Activated CD4-positive, alpha-beta memory T cell treated with anti-CD3 and anti-CD28 coated beads for 36 hours (primary cell): ENCODE measurements at regions of chr9 and their contacts with region 1.

Region 1: DNA sequence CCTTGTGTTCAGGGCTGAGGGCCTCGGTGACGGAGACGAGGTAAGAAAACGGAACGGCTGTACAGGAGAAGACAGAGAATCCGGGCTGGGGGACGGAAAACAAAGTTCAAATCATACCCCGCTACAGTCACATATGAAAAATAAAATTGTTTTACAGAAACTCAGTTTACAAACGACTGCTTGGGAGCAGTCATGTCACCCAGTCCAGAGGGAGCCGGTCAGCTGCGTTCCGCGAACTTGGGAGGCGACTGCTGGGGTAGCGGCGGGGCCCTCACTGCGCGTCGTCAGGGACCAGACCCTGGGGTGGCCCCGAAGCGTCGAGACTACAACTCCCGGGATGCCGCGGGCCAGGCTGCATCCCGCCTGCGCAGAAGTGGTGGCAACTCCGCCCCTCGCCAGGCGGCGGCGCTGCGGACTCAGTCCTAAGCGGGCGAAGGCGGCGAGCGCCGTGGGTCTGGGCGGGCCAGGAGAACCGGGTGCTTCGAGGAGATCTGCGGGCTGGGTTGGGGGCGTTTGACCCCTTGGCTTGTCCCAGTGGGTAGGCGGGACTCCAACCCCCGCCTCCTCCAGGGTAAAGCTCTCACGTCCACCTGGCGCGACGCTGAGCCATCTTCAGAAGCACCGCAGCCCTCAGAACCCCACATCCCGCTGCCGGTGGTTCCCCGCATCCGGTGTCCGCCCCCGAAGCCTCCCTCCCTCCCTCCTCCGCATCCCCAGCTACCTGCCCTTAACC is 4.0 kb downstream of the SIT1 start:
- DNase-seq: peak; percentile 95
- H3K4me3 Mint-ChIP-seq: peak overlapping the region; percentile 91
- H3K27ac Mint-ChIP-seq: peak overlapping the region; percentile 93
- H3K4me1 Mint-ChIP-seq: peaks cover 49% of the 10 kb centered on the region
- H3K27me3 Mint-ChIP-seq: no peaks in the 10 kb centered on the region

Region 2: DNA sequence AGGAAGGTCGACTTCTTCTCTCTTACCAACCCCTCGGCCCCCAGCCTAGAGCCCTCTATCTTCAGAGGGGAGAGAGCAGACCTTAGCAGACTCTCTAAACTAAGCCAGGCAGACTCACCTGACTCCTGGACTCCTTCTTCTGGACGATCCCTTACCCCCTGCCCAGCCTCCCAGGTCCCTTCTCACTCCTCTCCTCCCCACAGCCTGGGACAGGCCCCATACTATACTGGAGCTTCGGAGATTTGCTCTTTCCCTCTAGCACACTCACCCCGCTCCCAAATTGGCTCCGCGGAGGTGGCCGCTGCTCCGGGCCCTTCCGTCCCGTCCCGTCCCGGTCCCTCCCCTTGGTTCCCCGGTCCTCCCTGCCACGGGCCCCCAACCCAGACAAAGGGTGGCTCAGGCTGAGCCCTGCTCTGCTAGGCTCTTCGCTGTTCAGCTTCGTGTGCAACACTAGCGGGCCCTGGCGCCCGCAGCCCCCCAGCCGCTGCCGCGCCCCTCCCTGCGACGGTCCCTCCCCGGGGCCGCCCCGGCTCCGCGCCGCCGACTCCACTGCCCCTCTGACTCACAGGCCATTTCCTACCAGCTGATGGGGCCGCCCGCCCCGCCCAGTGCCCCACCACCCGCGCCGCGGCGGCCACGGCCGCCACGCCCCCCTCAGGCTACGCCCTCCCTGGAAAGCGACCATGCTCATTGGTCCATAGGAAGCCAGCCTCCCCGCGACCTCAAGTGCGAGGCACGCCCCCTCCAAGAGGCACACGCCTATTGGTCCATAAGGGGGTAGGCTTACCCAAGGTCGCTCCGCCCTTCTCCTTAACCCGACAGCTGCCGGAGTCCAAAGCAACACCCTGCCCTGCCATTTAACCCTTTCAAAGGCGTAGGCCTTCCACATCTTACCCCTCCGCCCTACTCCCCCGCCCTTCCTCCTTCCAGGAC is 535.4 kb before region 1 on chr9:
- CTCF ChIA-PET with region 1: no interaction called
- POLR2A ChIA-PET with region 1: no interaction called
- intact Hi-C with region 1: loop called (anchors 5 kb)
- DNase-seq: peak; percentile 98
- H3K4me3 Mint-ChIP-seq: peak overlapping the region; percentile 75
- H3K27ac Mint-ChIP-seq: peak overlapping the region; percentile 81
- H3K4me1 Mint-ChIP-seq: peaks cover 42% of the 10 kb centered on the region
- H3K27me3 Mint-ChIP-seq: no peaks in the 10 kb centered on the region

Region 3: GRCh38 chr9:35616681-35617459 is 29.8 kb before region 1 on chr9:
- CTCF ChIA-PET with region 1: interaction called, 32 read pairs
- POLR2A ChIA-PET with region 1: interaction called, 16 read pairs
- intact Hi-C with region 1: loop called (anchors 1 kb)
- DNase-seq: peak; percentile 80
- H3K4me3 Mint-ChIP-seq: peak overlapping the region; percentile 77
- H3K27ac Mint-ChIP-seq: peak overlapping the region; percentile 79
- H3K4me1 Mint-ChIP-seq: peaks cover 37% of the 10 kb centered on the region
- H3K27me3 Mint-ChIP-seq: no peaks in the 10 kb centered on the region

Region 4: GRCh38 chr9:35657546-35658136 is 10.9 kb after region 1 on chr9 and contains the start of gene RMRP:
- CTCF ChIA-PET with region 1: interaction called, 82 read pairs
- POLR2A ChIA-PET with region 1: interaction called, 43 read pairs
- intact Hi-C with region 1: loop called (anchors 1 kb)
- DNase-seq: peak; percentile 96
- H3K4me3 Mint-ChIP-seq: peak within 1 kb of the TSS; percentile 86
- H3K27ac Mint-ChIP-seq: peak within 1 kb of the TSS; percentile 96
- H3K4me1 Mint-ChIP-seq: peaks cover 64% of the 10 kb centered on the region
- H3K27me3 Mint-ChIP-seq: peaks cover 2% of the 10 kb centered on the region
- total RNA-seq, gene RMRP: 10,694 to 13,592 TPM

Region 5: DNA sequence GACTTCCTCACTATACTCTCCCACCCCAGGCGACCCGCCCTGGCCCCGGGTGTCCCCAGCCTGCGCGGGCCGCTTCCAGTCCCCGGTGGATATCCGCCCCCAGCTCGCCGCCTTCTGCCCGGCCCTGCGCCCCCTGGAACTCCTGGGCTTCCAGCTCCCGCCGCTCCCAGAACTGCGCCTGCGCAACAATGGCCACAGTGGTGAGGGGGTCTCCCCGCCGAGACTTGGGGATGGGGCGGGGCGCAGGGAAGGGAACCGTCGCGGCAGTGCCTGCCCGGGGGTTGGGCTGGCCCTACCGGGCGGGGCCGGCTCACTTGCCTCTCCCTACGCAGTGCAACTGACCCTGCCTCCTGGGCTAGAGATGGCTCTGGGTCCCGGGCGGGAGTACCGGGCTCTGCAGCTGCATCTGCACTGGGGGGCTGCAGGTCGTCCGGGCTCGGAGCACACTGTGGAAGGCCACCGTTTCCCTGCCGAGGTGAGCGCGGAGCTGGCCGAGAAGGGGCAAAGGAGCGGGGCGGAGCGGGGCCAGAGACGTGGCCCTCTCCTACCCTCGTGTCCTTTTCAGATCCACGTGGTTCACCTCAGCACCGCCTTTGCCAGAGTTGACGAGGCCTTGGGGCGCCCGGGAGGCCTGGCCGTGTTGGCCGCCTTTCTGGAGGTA is 29.2 kb after region 1 on chr9:
- CTCF ChIA-PET with region 1: no interaction called
- POLR2A ChIA-PET with region 1: no interaction called
- intact Hi-C with region 1: no loop called
- DNase-seq: peak; percentile 59
- H3K4me3 Mint-ChIP-seq: peak overlapping the region; percentile 48
- H3K27ac Mint-ChIP-seq: no peak overlapping the region
- H3K4me1 Mint-ChIP-seq: peaks cover 4% of the 10 kb centered on the region
- H3K27me3 Mint-ChIP-seq: peaks cover 9% of the 10 kb centered on the region

Region 6: DNA sequence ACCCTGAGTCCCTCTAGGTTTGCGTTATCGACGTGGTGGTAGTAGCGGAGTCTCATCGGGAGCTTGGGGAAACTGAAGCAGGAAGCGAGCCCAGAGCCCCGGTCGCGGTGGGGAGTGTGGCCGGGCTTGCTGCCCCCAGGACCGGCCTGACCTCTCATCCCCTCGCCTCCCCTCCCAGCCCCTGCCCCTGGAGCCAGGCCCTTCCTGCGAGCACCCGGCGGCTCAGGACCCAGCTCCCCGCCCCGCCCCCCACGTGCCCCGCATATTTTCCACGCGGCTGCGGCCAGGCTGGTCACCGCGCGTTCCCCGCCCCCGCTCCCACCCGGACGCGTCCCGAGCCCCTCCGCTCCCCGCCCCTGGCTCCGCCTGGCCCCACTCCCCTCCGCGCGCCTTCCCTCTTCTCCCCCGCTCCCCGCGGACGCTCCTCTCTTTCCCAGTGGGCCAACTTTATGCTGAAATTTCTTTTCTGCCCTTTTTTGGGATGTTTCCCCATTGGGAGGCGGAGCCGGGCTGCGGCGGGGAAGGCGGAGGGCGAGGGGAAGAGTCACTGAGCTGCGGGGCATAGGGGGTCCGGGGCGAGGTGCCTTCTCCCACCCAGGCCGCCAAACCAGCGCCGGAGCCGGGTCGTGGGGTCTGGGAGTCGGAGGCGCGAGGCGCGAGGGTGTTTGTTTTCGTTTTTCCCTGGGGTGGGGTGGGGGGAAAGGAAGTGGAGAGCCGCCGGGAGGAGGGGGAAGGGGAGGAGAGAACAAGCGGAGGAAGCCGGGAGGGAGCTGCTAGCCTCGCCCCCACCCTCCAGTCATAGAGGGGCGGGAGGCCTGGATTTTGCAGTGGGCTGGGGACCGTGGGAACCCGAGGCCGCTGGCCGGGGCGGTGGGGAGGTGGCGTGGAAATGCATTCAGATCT is 44.0 kb after region 1 on chr9:
- CTCF ChIA-PET with region 1: interaction called, 30 read pairs
- POLR2A ChIA-PET with region 1: interaction called, 4 read pairs
- intact Hi-C with region 1: no loop called
- DNase-seq: peak; percentile 56
- H3K4me3 Mint-ChIP-seq: peak overlapping the region; percentile 75
- H3K27ac Mint-ChIP-seq: no peak overlapping the region
- H3K4me1 Mint-ChIP-seq: peaks cover 21% of the 10 kb centered on the region
- H3K27me3 Mint-ChIP-seq: no peaks in the 10 kb centered on the region

Region 7: GRCh38 chr9:35790385-35791296 is 143.9 kb after region 1 on chr9:
- CTCF ChIA-PET with region 1: no interaction called
- POLR2A ChIA-PET with region 1: no interaction called
- intact Hi-C with region 1: no loop called
- DNase-seq: peak; percentile 60
- H3K4me3 Mint-ChIP-seq: no peak overlapping the region
- H3K27ac Mint-ChIP-seq: no peak overlapping the region
- H3K4me1 Mint-ChIP-seq: peaks cover 5% of the 10 kb centered on the region
- H3K27me3 Mint-ChIP-seq: no peaks in the 10 kb centered on the region